WTC11 (cell line): ENCODE measurements at regions of chr19 and their contacts with region 1.

Region 1: GRCh38 chr19:20923077-20923871 is at the start of gene ZNF85:
- DNase-seq: peak; percentile 91
- ATAC-seq: peak; percentile 98
- H3K4me3 Mint-ChIP-seq: peak within 1 kb of the TSS; percentile 99
- H3K27ac Mint-ChIP-seq: peak within 1 kb of the TSS; percentile 99
- H3K4me1 Mint-ChIP-seq: peaks cover 16% of the 10 kb centered on the region
- H3K27me3 Mint-ChIP-seq: no peaks in the 10 kb centered on the region
- CTCF ChIP-seq: no peak
- total RNA-seq, gene ZNF85: 22.8 to 23.7 TPM (median 22.8 TPM) in 3 replicates

Region 2: GRCh38 chr19:20999731-21000352 is 76.6 kb after region 1 on chr19:
- CTCF ChIA-PET with region 1: no interaction called
- POLR2A ChIA-PET with region 1: interaction called, 11 read pairs
- DNase-seq: peak; percentile 93
- ATAC-seq: peak; percentile 98
- H3K4me3 Mint-ChIP-seq: peak overlapping the region; percentile 86
- H3K27ac Mint-ChIP-seq: peak overlapping the region; percentile 95
- H3K4me1 Mint-ChIP-seq: peaks cover 21% of the 10 kb centered on the region
- H3K27me3 Mint-ChIP-seq: no peaks in the 10 kb centered on the region; the same call in 1 of the 2 replicates
- CTCF ChIP-seq: no peak